ENCODE measurements at regions of chr13 and their contacts with region 1.

Region 1: DNA sequence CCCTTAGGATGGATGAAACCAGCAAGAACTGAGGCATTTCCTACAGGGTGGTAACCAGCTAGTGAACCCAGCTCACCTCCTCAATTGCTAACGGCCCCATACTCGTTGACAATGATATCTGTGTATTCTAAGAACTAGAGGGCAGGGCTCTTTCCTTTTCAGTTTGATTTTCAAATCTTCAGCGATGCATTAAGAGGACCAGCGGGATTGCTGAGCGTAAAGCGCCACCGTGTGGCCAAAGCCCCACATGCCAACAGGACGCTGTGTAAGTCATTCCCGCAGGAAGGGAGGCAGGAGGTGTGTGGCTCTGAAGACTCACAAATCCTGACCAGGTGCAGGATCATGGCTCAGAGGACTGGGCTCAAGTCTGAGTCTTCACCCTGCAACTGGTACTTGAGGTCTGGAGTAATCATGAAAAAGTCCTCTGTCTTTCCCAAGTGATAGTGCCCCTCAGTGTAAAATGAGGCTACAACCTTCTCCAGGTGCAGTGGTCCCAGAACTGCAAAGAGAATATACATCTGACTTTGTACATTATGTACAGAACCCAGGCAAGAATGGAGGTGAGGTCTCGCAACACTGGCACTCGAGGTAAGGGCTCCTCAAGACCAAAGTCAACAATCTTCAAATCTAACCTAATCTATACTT is 40.9 kb downstream of the C13orf42 start:
- H3K4me3 Mint-ChIP-seq: no peak overlapping the region
- H3K27ac Mint-ChIP-seq: no peak overlapping the region
- H3K4me1 Mint-ChIP-seq: peaks cover 11% of the 10 kb centered on the region
- H3K27me3 Mint-ChIP-seq: peaks cover 24% of the 10 kb centered on the region

Region 2: DNA sequence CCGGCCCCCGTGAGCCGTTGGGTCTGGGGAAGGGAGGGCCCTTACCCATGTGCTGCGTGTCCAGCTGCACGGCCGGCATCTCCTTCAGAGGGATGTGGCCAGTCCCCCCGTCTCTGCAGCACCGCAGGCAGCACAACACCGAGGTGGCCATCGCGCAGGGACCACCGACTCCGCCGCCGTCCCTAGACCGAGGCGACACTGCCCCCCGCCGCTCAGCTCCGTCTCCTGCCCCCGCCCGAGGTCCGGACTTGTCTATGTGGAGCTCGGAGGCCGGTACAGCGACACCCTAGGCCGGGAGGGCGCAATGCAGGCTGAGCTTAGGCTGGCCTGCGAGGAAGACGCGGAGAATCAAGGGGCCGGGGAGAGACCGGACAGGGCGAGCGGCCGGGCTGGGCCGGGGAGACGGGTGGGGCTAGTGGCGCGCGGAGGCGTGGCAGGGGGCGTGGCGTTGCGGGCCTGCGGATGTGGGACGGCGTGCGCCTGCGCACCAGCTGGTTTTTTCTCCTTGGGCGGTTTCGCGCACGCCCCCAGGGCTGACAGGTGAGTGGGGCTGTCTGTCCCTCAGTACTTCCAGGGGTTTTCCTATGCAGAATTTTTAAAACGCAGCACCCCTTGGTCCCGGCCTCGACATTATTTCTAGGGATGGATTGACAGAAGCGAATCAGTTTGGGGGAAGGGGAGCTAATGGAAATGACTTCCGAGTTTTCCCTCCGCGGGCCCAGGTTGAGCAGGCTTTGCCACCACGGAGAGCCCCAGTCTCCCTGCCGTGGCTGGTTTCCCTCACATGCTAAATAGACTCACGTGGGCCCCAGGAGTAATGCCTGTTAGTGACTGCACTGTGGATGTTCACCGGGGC is 1133.8 kb before region 1 on chr13 and contains the start of gene SPRYD7:
- intact Hi-C with region 1: no loop called
- H3K4me3 Mint-ChIP-seq: peak within 1 kb of the TSS; percentile 78
- H3K27ac Mint-ChIP-seq: peak within 1 kb of the TSS; percentile 79
- H3K4me1 Mint-ChIP-seq: peaks cover 22% of the 10 kb centered on the region
- H3K27me3 Mint-ChIP-seq: no peaks in the 10 kb centered on the region

Region 3: GRCh38 chr13:49976314-49977258 is 1093.5 kb before region 1 on chr13:
- intact Hi-C with region 1: loop called (anchors 5 kb)
- H3K4me3 Mint-ChIP-seq: no peak overlapping the region
- H3K27ac Mint-ChIP-seq: no peak overlapping the region
- H3K4me1 Mint-ChIP-seq: peaks cover 9% of the 10 kb centered on the region
- H3K27me3 Mint-ChIP-seq: no peaks in the 10 kb centered on the region

Region 4: DNA sequence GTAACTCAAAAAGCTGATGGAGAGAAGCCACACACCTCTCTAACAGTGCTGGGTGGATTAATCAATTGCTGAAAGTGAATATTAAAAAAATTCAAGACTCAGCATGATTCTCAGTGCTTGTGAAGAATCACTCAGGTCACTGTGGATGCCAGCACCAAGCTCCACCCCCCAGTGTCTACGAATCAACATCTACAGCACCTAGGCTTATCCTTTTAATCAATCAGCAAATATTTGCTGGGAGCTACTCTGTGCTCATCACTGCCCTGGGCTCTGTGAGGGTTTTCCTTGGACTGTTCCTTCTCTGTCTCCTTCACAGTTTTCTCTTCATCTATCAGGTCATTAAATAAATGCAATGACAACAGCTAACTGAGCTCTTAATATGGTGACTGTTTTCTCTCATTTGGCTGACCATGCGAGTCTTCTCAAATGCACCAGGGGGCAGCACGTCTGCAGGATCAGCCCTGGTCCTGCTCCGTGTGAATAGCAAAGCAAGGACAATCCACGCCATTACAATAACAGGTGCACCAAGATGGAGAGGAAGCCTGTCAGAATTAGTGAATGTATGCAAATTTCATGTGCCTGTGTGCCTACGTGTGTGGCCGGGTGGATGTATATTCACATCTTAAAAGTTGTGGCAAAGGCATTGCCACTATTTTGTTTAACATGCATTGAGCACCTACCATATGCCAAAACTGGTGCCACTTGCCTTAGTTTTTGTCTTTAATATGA is 55.5 kb after region 1 on chr13:
- intact Hi-C with region 1: no loop called
- H3K4me3 Mint-ChIP-seq: no peak overlapping the region
- H3K27ac Mint-ChIP-seq: no peak overlapping the region
- H3K4me1 Mint-ChIP-seq: no peaks in the 10 kb centered on the region
- H3K27me3 Mint-ChIP-seq: peaks cover 8% of the 10 kb centered on the region